Panc1 (cell line): ENCODE measurements at regions of chr11 and their contacts with region 1.

Region 1: DNA sequence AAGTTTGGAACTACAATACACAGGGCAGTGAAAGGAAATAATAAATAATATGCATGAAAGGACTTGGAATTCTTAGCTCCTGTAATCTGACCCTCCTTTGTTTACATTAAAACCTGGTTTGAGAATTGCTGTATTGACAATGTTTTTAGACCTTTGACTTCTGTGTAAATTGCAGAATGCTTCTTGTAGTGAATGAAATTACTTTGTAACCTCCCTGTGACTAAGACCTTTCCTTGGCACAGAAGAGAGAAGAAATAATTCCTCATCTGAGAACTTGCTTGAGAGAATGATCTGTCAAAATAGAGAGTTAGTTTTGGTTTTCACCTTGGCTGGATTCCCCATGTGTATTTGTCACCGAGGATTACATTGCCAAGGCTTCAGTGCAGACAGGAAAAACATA is 640.0 kb upstream of the ANO5 start:
- DNase-seq: no peak
- ATAC-seq: no peak
- H3K4me3 ChIP-seq: no peak overlapping the region
- H3K27ac ChIP-seq: no peak overlapping the region
- H3K4me1 ChIP-seq: no peaks in the 10 kb centered on the region
- H3K27me3 ChIP-seq: no peaks in the 10 kb centered on the region
- CTCF ChIP-seq: no peak

Region 2: GRCh38 chr11:20991471-20991870 is 561.4 kb before region 1 on chr11:
- CTCF ChIA-PET with region 1: no interaction called
- POLR2A ChIA-PET with region 1: no interaction called
- in situ Hi-C with region 1: no loop called
- intact Hi-C with region 1: loop called (anchors 5 kb)
- DNase-seq: no peak
- ATAC-seq: no peak
- H3K4me3 ChIP-seq: no peak overlapping the region
- H3K27ac ChIP-seq: no peak overlapping the region
- H3K4me1 ChIP-seq: no peaks in the 10 kb centered on the region
- H3K27me3 ChIP-seq: no peaks in the 10 kb centered on the region
- CTCF ChIP-seq: no peak

Region 3: DNA sequence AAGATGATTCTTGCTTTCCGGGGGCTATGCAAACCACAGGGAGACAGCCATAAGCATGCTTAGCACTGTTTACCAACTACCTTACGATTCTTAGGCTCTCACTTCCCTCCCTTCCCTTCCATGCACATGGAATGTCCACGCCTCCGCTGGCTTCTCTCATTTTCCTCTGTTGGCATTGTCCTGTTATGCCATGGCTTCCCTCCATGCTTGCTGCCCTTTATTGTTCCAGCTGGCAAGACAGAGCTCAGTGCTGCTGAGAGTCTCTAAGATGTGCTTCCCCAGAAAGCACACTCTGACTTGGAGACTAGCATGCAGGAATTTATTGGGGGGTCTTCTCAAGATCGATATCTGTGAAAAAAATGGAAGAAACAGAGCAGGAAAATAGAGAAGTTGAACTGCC is 504.3 kb before region 1 on chr11:
- CTCF ChIA-PET with region 1: no interaction called
- POLR2A ChIA-PET with region 1: no interaction called
- in situ Hi-C with region 1: no loop called
- intact Hi-C with region 1: no loop called
- DNase-seq: no peak
- ATAC-seq: no peak
- H3K4me3 ChIP-seq: no peak overlapping the region
- H3K27ac ChIP-seq: no peak overlapping the region
- H3K4me1 ChIP-seq: no peaks in the 10 kb centered on the region
- H3K27me3 ChIP-seq: no peaks in the 10 kb centered on the region
- CTCF ChIP-seq: no peak

Region 4: GRCh38 chr11:22392561-22392960 is 839.6 kb after region 1 on chr11:
- CTCF ChIA-PET with region 1: no interaction called
- POLR2A ChIA-PET with region 1: no interaction called
- in situ Hi-C with region 1: no loop called
- intact Hi-C with region 1: no loop called
- DNase-seq: no peak
- ATAC-seq: no peak
- H3K4me3 ChIP-seq: no peak overlapping the region
- H3K27ac ChIP-seq: no peak overlapping the region
- H3K4me1 ChIP-seq: no peaks in the 10 kb centered on the region
- H3K27me3 ChIP-seq: no peaks in the 10 kb centered on the region
- CTCF ChIP-seq: no peak